Activated CD4-positive, alpha-beta T cell treated with anti-CD3 and anti-CD28 coated beads, Interleukin-2, amount 10 ng/mL, durations not matched to agents 24 days and 14 days (primary cell): ENCODE measurements at regions of chr7 and their contacts with region 1.

Region 1: GRCh38 chr7:151448261-151449252 is 8.6 kb upstream of the CRYGN start:
- DNase-seq: peak; percentile 93
- H3K4me3 Mint-ChIP-seq: peak overlapping the region; percentile 65
- H3K27ac Mint-ChIP-seq: no peak overlapping the region
- H3K4me1 Mint-ChIP-seq: peaks cover 4% of the 10 kb centered on the region
- H3K27me3 Mint-ChIP-seq: peaks cover 18% of the 10 kb centered on the region

Region 2: GRCh38 chr7:151315038-151315655 is 133.4 kb before region 1 on chr7:
- intact Hi-C with region 1: loop called (anchors 5 kb)
- DNase-seq: peak; percentile 94
- H3K4me3 Mint-ChIP-seq: peak overlapping the region; percentile 31
- H3K27ac Mint-ChIP-seq: no peak overlapping the region
- H3K4me1 Mint-ChIP-seq: peaks cover 6% of the 10 kb centered on the region
- H3K27me3 Mint-ChIP-seq: no peaks in the 10 kb centered on the region

Region 3: DNA sequence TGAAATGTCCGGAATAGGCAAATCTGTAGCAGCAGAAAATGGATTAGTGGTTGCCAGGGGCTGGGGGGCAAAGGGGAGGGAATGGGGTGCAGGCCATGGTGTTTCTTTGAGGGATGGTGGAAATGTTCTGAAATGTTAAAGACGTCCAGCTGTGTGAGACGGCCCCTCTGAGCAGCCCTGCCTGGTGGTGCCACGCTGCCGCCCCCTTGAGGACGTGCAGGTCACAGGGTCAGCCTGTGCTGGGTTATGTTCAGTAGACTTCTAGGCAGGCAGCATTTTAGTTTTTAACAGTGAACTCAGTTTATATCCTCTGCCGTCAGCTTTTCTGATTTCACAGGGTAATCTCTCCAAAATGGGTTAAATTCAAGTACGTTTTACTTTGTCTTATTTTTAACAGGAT is 97.5 kb before region 1 on chr7:
- intact Hi-C with region 1: loop called (anchors 5 kb)
- DNase-seq: peak; percentile 78
- H3K4me3 Mint-ChIP-seq: peak overlapping the region; percentile 80
- H3K27ac Mint-ChIP-seq: peak overlapping the region; percentile 93
- H3K4me1 Mint-ChIP-seq: peaks cover 40% of the 10 kb centered on the region
- H3K27me3 Mint-ChIP-seq: no peaks in the 10 kb centered on the region

Region 4: GRCh38 chr7:151368136-151368571 is 80.4 kb before region 1 on chr7:
- intact Hi-C with region 1: loop called (anchors 1 kb)
- DNase-seq: peak; percentile 93
- H3K4me3 Mint-ChIP-seq: no peak overlapping the region
- H3K27ac Mint-ChIP-seq: no peak overlapping the region
- H3K4me1 Mint-ChIP-seq: peaks cover 5% of the 10 kb centered on the region
- H3K27me3 Mint-ChIP-seq: no peaks in the 10 kb centered on the region

Region 5: DNA sequence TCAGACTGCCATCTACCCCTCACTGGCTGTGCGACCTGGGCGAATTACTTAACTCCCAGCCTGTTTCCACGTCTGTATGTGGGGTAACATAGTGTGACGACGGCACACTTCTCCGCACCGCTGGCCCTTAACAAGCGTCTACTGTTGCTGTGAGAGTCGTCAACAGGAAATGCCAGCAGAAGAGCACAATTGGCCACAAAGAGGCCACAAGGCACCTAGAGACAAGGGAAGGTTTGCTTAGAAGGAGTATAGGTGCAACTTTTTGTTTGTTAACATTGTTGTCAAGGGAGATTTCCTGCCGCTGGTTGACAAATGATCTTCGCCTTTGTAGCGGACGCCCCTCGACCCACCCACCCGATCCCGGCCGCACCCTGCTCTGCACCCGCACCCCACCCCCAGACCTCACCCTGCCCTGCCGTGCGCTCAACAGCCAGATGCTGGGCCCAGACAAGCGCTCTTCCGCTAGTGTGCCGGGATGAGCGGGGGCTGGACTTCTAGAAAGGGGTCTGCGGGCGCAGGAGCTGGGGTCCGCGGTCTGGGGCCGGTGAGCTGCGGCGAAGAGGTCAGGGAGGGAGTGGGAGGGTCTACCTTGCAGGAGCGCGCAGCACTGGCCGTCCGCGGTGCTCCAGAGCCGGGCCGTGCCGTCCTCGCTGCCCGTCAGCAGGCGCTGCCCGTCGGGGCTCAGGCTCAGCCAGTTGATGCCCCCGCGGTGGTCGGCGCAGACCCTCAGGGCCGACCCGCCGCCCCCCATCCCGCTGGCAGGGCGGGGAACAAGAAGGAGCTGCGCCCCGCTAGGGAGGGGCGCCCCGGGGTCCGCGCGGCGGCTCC is 39.5 kb before region 1 on chr7:
- intact Hi-C with region 1: loop called (anchors 2 kb)
- DNase-seq: peak; percentile 83
- H3K4me3 Mint-ChIP-seq: peak overlapping the region; percentile 52
- H3K27ac Mint-ChIP-seq: no peak overlapping the region
- H3K4me1 Mint-ChIP-seq: peaks cover 14% of the 10 kb centered on the region
- H3K27me3 Mint-ChIP-seq: peaks cover 52% of the 10 kb centered on the region